B cell (primary cell): ENCODE measurements at regions of chr19 and their contacts with region 1.

Region 1: DNA sequence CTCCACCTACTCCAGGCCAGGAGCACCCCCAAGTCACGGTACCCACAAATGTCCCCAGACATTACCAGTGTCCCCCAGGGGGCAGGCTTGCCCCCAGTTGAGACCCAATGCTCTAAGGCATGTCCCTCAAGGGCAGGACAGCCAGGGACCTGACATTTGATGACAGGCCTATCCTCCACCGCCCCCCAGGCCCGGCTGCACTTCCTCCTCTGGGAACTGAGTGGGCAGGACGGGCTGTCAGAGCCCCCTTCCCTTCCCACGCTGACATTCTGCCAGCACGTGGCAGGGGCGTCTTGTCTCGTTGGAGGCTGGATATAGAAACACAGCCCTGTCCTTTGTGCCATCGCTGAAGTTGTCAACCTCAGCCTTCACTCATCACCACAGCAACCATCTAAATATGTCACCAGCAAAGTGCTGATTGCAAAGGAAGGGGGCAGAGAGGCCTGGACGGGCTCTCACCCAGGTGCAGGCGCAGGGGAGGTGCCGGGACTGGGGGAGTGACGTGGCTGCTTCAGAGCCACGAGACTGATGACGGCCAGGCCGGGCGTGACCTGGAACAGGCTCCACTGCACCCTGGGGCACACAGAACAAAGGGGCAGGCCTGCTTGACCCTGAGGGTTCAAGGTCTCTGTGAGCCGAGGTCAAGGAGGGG is 38.4 kb downstream of the GNG7 start:
- DNase-seq: peak; percentile 95
- ATAC-seq: peak; percentile 86
- H3K4me3 ChIP-seq: no peak overlapping the region
- H3K4me3 Mint-ChIP-seq: peak overlapping the region; percentile 78
- H3K27ac ChIP-seq: peak overlapping the region; percentile 92
- H3K27ac Mint-ChIP-seq: peak overlapping the region; percentile 98
- H3K4me1 ChIP-seq: peaks cover 35 to 43% of the 10 kb centered on the region in 2 donors
- H3K4me1 Mint-ChIP-seq: peaks cover 59% of the 10 kb centered on the region
- H3K27me3 ChIP-seq: no peaks in the 10 kb centered on the region
- H3K27me3 Mint-ChIP-seq: no peaks in the 10 kb centered on the region
- CTCF ChIP-seq: peak; percentile 75

Region 2: DNA sequence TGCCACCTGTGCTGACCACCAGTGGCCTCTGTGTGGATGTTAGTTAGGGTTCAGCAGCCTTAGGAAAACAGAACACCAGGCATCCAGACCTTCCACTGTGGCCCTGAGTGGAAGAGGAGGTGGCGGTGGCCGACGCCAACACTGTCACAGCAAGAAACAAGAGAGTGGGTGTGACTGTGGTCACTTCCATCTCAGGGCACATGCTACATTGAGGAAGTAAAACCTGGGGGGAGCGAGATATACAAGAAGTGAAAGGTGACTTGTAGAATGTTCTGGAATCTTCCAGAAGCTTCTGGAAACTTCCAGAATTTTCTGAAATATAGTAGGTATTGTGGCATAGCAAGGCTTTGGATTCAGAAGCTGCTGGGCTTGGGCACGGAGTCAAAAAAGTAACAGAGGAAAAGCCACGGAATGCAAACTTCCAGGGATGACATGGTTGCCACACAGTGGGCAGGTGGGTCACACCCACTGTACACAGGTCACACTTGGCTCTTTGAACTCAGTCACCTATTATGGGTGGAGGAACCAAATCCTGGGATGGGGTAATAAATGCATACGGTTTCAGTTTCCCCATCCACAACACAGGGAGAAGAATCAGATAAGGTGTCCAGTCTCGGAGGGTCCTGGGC is 14.1 kb after region 1 on chr19:
- CTCF ChIA-PET with region 1: interaction called, 3 read pairs
- POLR2A ChIA-PET with region 1: interaction called, 8 read pairs
- intact Hi-C with region 1: loop called (anchors 1 kb)
- DNase-seq: peak; percentile 91
- ATAC-seq: peak; percentile 59
- H3K4me3 ChIP-seq: no peak overlapping the region
- H3K4me3 Mint-ChIP-seq: peak overlapping the region; percentile 49
- H3K27ac ChIP-seq: peak overlapping the region; percentile 99 to 100
- H3K27ac Mint-ChIP-seq: peak overlapping the region; percentile 88
- H3K4me1 ChIP-seq: peaks cover 56 to 66% of the 10 kb centered on the region in 2 donors
- H3K4me1 Mint-ChIP-seq: peaks cover 70% of the 10 kb centered on the region
- H3K27me3 ChIP-seq: no peaks in the 10 kb centered on the region
- H3K27me3 Mint-ChIP-seq: no peaks in the 10 kb centered on the region
- CTCF ChIP-seq: no peak